K562 (cell line): ENCODE measurements at regions of chr16 and their contacts with region 1.

Region 1: DNA sequence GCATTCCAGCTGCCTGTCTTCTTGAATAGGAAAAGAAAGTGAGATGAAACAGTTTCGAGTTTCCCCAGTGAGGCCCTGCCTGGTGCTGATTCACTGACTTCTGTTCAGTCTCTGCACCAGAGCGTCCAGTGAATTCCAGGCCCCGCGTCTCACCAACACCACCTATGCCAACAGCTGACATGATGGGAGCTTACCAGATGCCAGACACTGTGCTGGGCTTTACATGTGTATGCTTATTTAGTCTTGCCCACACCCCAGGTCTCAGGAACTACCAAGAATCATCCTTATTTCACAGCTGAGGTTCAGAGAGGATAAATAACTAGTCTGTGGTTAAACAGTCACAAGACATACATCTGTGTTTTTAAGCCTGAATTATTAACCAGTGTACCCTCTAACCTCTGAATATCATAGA is 29.1 kb upstream of the IRX6 start:
- DNase-seq: no peak
- ATAC-seq: no peak
- H3K4me3 ChIP-seq: no peak overlapping the region
- H3K27ac ChIP-seq: no peak overlapping the region
- H3K4me1 ChIP-seq: no peaks in the 10 kb centered on the region
- H3K27me3 ChIP-seq: no peaks in the 10 kb centered on the region; a peak in 1 of 5 replicates
- CTCF ChIP-seq: no peak
- EP300 ChIP-seq: no peak
- POLR2A ChIP-seq: no peak
- RAD21 ChIP-seq: no peak

Region 2: DNA sequence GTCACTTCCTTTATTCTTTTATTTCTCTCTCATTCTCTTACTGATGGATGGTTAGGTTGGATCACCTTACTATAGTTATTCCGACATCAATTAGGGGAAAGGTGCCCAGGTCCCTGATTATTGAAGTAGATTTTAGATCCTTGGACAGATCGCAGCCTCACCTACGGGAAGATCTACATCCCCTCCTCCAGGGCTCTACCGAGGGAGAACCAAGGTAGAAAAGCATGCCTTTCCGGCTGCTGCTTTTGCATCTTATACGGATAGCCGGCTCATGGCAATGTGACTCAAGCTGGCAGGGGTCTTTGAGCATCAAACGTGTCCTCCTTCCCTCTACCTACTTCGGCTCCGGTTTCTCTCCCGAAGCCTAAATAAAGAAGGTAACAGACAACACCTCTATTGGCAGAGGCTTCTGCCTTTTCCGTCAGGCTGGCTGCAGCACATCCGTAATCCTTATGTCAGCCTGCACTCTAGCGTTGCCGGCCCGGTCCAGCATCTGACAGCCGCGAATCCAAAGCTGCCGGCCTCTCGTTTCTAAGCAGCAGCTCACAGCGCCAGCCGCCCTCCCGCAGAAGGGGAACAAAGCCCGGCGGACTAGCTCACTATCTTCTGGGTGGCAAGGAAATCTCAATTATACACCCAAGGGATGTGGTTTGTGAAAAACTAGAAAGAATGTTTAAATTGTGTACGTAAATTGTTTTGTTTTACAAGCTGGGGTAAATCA is 76.0 kb after region 1 on chr16:
- CTCF ChIA-PET with region 1: interaction called, 4 read pairs
- POLR2A ChIA-PET with region 1: no interaction called
- in situ Hi-C with region 1: no loop called
- intact Hi-C with region 1: loop called (anchors 5 kb)
- DNase-seq: peak in 2 of 4 experiments; percentile 13 to 19
- ATAC-seq: peak; percentile 68; the same call in 2 of the 3 replicates
- H3K4me3 ChIP-seq: no peak overlapping the region
- H3K27ac ChIP-seq: no peak overlapping the region
- H3K4me1 ChIP-seq: no peaks in the 10 kb centered on the region
- H3K27me3 ChIP-seq: peaks cover 7 to 14% of the 10 kb centered on the region in 2 experiments; a peak in 4 of 5 replicates
- CTCF ChIP-seq: peak in 2 of 3 experiments; percentile 25 to 40; a peak in 2 of 6 replicates
- EP300 ChIP-seq: no peak
- POLR2A ChIP-seq: no peak
- RAD21 ChIP-seq: peak in 1 of 2 experiments; percentile 42; a peak in 3 of 4 replicates